Sigmoid colon (tissue), 7 donors: ENCODE measurements at regions of chr1 and their contacts with region 1.

Region 1: DNA sequence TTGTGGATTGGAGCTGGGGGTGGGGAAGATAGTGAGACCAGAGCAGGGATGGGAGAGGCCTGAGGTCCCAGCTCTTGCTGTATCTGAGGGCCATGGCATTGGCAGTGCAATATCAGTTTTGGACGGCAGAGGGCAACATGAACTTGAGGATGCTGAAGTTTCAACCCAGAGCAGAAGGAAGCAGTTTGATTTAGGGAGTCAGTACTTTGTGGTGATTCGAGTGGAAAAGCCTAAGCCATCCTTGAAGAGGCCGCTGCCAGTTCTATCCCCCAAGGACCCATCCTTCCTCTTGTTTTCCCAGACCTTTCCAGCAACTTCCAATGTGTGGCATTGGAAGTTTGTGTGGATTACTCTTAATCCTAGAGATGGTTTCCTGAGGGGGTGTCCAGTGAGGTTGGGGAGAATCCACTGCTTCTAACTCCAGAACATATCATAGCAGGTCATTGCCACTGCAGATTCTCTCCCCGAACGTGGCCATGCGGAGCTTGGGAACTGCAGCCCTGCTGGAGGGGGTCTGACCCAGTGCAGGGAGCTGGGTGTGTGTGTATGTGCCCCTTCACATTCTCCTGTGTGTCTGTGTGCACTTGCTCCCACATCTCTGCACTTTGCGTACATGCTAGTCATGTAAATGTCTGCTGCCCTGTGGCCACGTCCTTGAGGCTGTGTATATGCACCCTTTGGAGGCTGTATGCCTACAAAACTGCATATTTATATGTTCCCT is 24.1 kb downstream of the SLC26A9 start:
- DNase-seq: peak; percentile 82
- H3K4me3 ChIP-seq: no peak overlapping the region
- H3K27ac ChIP-seq: no peak overlapping the region
- H3K4me1 ChIP-seq: peaks cover 0 to 4% (median 0%) of the 10 kb centered on the region in 4 donors
- H3K27me3 ChIP-seq: no peaks in the 10 kb centered on the region
- CTCF ChIP-seq: peak; percentile 66 to 94 (median 83)
- EP300 ChIP-seq: no peak
- POLR2A ChIP-seq: no peak

Region 2: DNA sequence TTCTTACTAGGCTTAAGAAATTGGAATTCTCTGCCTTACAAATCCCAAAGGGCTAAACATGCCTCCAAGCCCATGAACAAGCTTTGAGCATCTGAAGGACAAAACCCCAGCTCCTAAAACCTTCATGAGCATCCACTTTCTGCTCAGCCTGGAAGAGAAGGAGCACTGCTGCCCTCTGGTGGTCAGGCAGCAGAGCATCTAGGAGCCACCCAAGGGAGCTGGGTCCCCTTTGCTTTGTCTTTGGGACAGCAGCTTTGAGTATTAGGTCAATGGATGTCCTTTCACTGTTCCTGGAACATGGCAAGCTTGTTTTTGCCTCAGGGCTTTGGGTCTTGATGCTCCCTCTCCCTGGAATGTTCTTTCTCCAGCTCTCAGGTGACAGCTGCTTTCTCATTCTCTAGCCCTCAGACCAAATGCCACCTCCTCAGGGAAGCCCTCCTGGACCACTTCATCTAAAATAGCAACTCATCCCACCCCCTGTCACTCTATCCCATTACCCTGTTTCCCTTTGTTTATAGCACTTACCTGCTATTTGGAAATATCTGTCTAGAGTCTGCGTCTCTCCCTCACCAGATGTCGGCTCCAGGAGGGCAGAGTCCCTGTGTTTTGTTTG is 58.3 kb after region 1 on chr1:
- intact Hi-C with region 1: loop called (anchors 1 kb)
- DNase-seq: peak; percentile 76
- H3K4me3 ChIP-seq: no peak overlapping the region
- H3K27ac ChIP-seq: no peak overlapping the region
- H3K4me1 ChIP-seq: peaks cover 0 to 4% (median 0%) of the 10 kb centered on the region in 4 donors
- H3K27me3 ChIP-seq: no peaks in the 10 kb centered on the region
- CTCF ChIP-seq: peak; percentile 64 to 92 (median 90)
- EP300 ChIP-seq: no peak
- POLR2A ChIP-seq: no peak

Region 3: GRCh38 chr1:206143537-206144172 is 224.5 kb after region 1 on chr1:
- intact Hi-C with region 1: no loop called
- DNase-seq: no peak
- H3K4me3 ChIP-seq: no peak overlapping the region
- H3K27ac ChIP-seq: no peak overlapping the region
- H3K4me1 ChIP-seq: no peaks in the 10 kb centered on the region
- H3K27me3 ChIP-seq: no peaks in the 10 kb centered on the region
- CTCF ChIP-seq: no peak
- EP300 ChIP-seq: no peak
- POLR2A ChIP-seq: no peak

Region 4: DNA sequence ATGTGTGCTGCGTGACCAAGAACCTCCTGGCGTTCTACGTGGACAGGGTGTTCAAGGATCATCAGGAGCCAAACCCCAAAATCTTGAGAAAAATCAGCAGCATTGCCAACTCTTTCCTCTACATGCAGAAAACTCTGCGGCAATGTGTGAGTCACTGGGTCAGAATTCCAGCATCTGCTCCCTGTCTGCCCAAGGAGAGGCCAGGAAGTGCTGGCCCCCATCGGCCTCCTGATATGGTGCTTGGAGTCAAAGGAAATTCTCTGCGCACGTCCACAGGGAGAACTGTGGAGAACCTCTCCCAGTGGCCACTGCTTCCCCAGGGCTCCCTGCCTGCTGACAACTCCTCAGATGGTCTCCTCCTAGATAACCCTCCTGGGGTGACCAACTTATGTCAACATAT is 920.7 kb after region 1 on chr1:
- intact Hi-C with region 1: no loop called
- DNase-seq: no peak
- H3K4me3 ChIP-seq: no peak overlapping the region
- H3K27ac ChIP-seq: no peak overlapping the region
- H3K4me1 ChIP-seq: no peaks in the 10 kb centered on the region
- H3K27me3 ChIP-seq: peaks cover 0 to 9% (median 0%) of the 10 kb centered on the region in 3 donors
- CTCF ChIP-seq: no peak
- EP300 ChIP-seq: no peak
- POLR2A ChIP-seq: no peak